ENCODE measurements at regions of chr18 and their contacts with region 1.

Region 1: DNA sequence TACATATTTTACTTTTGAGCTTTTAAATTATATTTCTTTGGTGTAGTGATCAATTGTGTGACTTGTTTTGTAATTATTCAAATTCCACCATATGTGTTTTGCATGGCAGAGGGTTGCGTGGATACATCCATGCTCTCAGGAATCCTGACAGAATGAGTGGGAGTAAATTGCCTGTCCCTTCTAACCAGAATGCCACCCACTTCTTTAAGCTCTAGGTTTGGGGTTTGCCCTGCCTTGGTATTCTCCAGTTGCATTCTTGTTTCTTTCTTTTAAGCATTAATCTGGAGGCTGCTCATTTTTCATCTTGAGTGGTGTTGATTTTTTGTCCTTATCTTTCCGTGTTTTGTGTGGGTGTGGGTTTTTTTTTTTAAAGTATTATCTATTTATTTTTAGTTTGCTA is 360.0 kb downstream of the PTPRM start:
- DNase-seq: no peak
- ATAC-seq: no peak
- H3K4me3 ChIP-seq: no peak overlapping the region
- H3K27ac ChIP-seq: no peak overlapping the region
- H3K4me1 ChIP-seq: peaks cover 4 to 6% of the 10 kb centered on the region in 2 donors
- H3K27me3 ChIP-seq: no peaks in the 10 kb centered on the region

Region 2: GRCh38 chr18:7941533-7941932 is 14.4 kb after region 1 on chr18:
- intact Hi-C with region 1: loop called in 1 of 2 experiments (anchors 1 kb)
- DNase-seq: no peak
- ATAC-seq: no peak
- H3K4me3 ChIP-seq: no peak overlapping the region
- H3K27ac ChIP-seq: no peak overlapping the region
- H3K4me1 ChIP-seq: no peaks in the 10 kb centered on the region
- H3K27me3 ChIP-seq: no peaks in the 10 kb centered on the region